Activated T-helper 1 cell treated with anti-CD3 and anti-CD28 coated beads, Interleukin-12 subunit alpha, Interleukin-12 subunit beta, Interleukin-2, Interleukin-4 antibody, amounts not matched to agents 30 ng/mL and 10 ng/mL and 1 ng/mL, durations not matched to agents 14 hours and 24 hours and 36 hours (primary cell): ENCODE measurements at regions of chr1 and their contacts with region 1.

Region 1: GRCh38 chr1:26787706-26788514 is at the start of gene PIGV:
- DNase-seq: peak; percentile 84
- H3K4me3 Mint-ChIP-seq: peak within 1 kb of the TSS; percentile 97
- H3K27ac Mint-ChIP-seq: peak within 1 kb of the TSS; percentile 100
- H3K4me1 Mint-ChIP-seq: peaks cover 74% of the 10 kb centered on the region
- H3K27me3 Mint-ChIP-seq: peaks cover 1% of the 10 kb centered on the region
- total RNA-seq, gene PIGV: 18.5 and 22.6 TPM in 2 replicates

Region 2: DNA sequence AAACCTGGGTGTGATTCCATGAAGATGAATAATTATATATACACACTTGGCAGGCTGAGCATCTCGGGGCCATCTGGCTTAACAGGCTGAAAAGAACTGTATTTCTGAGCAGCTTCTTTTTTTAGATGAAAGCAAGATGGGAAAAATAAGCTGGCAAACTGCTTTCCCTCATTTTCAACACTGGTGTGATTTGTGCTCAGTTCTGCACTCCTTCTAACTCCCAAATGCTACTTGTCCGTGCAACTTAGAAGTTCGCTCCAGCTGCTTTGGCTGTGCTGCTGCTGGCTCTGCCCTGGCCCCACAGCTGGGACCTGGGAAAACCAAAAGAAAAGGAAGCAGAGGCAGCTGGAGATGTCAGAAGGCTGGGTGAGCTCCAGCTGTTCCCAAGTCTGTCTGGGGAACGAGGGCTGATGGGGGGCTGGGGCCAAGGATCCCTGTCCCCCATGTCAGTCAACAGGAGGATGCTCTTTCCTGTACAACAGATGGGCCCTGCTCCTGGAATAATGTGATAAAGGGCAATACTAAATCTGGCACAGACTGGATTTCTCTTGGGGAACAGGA is 835.0 kb before region 1 on chr1:
- intact Hi-C with region 1: no loop called
- DNase-seq: no peak
- H3K4me3 Mint-ChIP-seq: no peak overlapping the region
- H3K27ac Mint-ChIP-seq: no peak overlapping the region
- H3K4me1 Mint-ChIP-seq: peaks cover 4% of the 10 kb centered on the region
- H3K27me3 Mint-ChIP-seq: peaks cover 3% of the 10 kb centered on the region

Region 3: GRCh38 chr1:26431979-26432695 is 355.8 kb before region 1 on chr1 and contains the start of gene DHDDS:
- intact Hi-C with region 1: loop called (anchors 5 kb)
- DNase-seq: peak; percentile 98
- H3K4me3 Mint-ChIP-seq: peak within 1 kb of the TSS; percentile 94
- H3K27ac Mint-ChIP-seq: peak within 1 kb of the TSS; percentile 89
- H3K4me1 Mint-ChIP-seq: peaks cover 18% of the 10 kb centered on the region
- H3K27me3 Mint-ChIP-seq: peaks cover 12% of the 10 kb centered on the region
- total RNA-seq, gene DHDDS: 58.4 and 60.9 TPM in 2 replicates

Region 4: DNA sequence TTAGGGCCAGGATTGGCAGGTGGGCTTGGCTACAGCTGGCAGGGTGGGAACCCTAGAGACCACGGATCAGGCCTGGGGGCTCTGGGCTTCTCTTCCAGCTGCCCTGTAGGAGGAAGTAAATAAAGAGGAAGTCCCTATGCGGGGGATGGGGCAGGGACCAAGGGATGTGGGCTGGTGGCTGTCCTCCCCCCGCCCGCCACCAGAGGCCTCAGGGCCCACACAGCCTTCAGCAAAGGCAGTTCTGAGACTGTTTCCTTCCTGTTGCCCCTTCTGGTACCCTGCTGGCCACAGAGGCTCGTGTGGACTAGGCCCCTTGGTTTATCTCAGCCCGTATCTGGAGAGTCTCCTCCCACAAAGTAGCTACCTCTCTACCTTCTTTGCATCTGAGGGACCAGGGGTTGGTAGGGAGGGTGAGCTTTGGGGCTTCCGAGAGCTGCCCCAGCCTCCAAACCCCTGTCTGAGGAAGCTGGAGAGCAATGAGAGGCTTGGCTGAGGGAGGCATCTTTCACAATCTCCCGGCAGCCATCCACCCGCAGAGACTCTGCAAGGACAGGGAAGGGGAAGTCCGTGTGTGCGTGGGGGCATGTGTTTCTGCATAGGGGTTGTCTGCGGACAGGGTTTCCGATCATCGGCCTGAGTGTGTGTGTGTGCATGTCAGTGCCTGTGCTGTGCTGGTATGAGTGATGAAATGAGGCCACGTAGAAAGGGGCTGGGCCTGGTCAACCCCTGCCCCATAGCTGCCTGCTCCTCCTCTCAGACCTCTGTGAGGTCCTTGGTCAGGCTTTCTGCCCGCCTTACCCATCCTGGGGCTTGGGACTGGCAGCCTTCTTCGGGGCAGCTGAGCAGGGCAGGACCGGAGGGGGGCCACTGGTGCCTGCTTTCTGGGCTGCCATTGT is 245.8 kb before region 1 on chr1:
- intact Hi-C with region 1: loop called (anchors 1 kb)
- DNase-seq: peak; percentile 73
- H3K4me3 Mint-ChIP-seq: peak overlapping the region; percentile 76
- H3K27ac Mint-ChIP-seq: peak overlapping the region; percentile 95
- H3K4me1 Mint-ChIP-seq: peaks cover 85% of the 10 kb centered on the region
- H3K27me3 Mint-ChIP-seq: no peaks in the 10 kb centered on the region

Region 5: DNA sequence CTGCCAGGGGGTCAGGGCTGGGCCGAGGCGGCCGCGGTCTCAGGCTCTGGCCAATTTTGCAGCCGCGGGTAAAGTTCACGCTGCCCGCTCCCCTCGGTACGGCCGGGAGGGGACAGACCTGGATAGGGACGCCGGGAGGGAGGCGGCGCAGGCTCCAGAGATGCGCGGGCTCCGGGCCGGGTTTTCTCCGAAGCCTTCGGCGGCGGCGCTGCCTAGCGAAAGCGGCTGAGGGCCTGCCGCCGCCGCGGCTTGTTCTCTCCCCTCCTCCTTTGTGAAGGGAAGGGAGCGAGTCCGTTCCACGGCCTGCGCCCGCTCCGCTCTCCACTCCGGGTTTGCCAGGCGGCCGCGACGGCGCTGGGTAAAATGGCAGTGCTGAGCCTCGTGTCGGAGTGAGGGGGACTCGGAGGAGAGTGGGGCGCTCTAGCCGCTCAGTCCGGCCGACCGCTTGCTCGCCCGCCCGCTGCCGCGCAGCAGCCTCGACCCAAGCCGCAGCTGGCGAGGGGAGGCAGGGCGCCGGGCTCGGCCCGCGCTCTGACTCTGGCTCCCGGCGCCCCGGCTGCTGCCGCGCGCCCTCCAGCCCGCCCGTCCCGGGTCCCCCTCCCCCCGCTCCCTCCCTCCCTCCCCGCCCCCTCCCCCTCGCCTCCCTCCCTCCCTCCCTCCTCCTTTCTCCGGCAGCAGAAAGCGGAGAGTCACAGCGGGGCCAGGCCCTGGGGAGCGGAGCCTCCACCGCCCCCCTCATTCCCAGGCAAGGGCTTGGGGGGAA is 92.4 kb before region 1 on chr1 and contains the start of gene ARID1A:
- intact Hi-C with region 1: loop called (anchors 1 kb)
- DNase-seq: peak; percentile 96
- H3K4me3 Mint-ChIP-seq: peak within 1 kb of the TSS; percentile 90
- H3K27ac Mint-ChIP-seq: peak within 1 kb of the TSS; percentile 96
- H3K4me1 Mint-ChIP-seq: peaks cover 31% of the 10 kb centered on the region
- H3K27me3 Mint-ChIP-seq: no peaks in the 10 kb centered on the region
- total RNA-seq, gene ARID1A: 130 and 132 TPM in 2 replicates

Region 6: DNA sequence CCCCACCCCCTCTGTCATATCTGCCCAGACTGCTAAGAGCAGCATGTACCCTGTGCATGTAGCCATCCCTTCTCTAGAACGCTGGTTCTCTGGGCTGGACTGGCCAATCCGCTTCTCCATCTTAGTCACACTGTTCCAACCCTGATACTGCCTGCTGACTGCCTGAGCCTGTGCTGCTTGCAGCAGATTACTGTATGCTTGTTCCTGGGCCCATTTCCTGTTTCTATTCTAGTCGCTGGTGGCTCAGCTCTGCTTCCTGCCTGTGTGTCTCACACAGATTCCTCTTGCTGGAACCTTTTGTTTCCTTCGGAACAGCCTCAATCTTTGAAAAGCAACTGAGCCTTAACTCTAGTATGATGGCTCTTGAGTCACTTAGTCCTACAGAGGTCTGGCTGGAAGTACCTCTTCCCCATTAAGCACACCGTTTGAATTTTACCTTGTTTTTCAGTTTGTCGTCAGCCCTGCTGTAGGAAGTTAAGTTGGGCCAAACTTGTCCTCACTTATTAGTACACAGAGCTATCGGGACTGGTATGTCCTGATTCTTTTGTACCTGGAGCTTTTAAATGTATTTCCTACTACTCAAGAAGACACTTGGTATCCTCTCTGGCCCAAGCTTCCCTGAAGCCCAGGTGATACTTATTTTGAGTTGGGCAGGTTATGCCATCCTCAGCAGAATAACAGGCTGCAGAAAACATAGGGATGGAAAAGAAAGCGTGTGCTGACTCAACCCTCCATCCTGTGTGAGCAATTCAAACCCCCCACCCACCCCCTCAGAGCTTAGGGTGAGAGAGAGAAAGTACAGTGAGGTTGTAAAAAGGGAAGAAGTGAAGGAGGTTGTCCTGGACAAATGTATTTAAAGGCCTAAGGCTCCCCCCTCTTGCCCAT is 43.6 kb before region 1 on chr1:
- intact Hi-C with region 1: loop called (anchors 1 kb)
- DNase-seq: peak; percentile 84
- H3K4me3 Mint-ChIP-seq: peak overlapping the region; percentile 73
- H3K27ac Mint-ChIP-seq: peak overlapping the region; percentile 93
- H3K4me1 Mint-ChIP-seq: peaks cover 77% of the 10 kb centered on the region
- H3K27me3 Mint-ChIP-seq: no peaks in the 10 kb centered on the region

Region 7: DNA sequence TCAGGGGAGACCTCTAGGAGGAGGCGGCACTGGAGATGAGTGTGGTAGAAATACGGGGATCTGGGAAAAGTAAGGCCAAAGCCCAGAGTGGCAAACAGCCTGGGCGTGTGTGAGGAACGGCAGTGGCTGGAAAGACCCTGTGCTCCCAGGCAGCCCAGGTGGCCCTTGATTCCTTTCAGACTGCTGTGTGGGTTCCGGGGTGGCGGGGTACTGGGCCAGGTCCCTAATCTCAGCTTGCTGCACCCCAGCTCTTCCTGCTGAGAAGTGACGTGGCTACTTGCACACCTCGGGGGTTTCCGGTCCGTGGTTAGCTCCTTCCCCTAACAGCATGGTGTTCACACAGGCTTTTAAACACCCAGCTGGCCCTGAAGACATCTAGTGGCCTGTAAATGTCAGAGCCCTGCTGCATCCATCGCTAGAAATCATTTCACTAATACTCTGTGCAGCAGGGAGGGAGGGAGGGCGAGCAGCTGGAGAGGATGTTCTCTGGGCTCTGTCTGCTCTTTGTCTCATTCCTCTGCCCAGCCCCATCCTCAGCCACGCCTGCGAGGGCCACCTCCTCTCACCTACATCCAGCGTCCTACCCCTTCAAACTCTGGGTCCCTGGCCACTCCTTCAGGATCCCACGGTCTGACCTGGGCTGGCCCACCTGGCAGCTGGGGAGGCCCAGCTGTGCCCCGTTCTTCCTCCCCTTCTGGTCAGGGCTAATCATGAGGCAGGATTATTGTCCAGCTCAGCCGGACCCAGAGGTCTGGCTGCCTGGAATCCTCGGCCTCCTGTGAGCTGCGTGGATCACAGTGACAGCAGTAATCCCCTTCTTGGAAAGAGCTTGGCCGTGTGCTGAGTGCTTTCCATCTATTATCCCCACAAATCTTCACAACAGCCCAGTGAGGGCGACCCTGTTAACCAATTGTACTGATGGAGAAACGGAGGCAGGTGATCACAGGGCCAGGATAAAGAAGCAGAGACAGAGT is 45.8 kb after region 1 on chr1:
- intact Hi-C with region 1: loop called (anchors 1 kb)
- DNase-seq: peak; percentile 89
- H3K4me3 Mint-ChIP-seq: peak overlapping the region; percentile 75
- H3K27ac Mint-ChIP-seq: peak overlapping the region; percentile 99
- H3K4me1 Mint-ChIP-seq: peaks cover 69% of the 10 kb centered on the region
- H3K27me3 Mint-ChIP-seq: no peaks in the 10 kb centered on the region

Region 8: DNA sequence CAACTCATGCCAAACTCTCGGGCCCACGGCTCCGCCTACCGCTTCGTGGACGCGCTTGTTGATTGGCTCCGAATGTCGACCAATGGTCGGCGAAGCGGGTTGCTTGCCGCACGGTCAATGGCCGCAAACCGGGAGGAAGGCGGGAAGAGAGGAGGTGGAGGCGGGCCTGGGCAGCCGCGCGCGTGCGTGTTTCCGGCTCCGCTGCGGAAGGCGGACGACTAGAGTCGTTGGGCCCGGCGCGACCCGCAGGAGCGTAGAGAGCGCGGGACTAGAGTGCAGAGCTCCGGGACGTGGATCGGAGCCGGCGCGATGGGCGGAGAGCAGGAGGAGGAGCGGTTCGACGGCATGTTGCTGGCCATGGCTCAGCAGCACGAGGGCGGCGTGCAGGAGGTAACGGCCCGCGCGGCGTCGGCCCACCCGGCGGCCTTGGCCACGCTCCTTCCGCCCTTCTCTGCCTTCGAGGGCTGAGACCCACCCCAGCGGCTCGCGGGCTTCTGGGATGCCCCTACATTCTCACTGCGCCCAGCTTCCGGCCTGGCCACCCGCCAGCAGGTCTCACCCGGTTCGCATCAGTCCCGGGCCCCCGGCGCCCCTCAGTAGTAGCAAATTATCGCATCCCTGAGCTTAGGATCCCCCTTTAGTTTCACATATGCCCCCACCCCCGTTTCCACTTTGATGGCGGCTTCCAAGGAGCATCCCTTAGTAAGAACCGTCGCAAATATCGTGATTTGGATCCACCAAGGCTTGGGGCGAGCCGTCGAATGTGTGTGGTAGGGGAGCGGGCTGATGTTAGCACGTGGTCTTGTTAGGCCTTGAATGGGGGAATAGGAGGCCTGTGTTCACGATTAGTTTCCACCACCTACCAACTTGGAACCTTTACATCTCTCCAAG is 133.9 kb after region 1 on chr1 and contains the start of gene NUDC:
- intact Hi-C with region 1: loop called (anchors 1 kb)
- DNase-seq: peak; percentile 97
- H3K4me3 Mint-ChIP-seq: peak within 1 kb of the TSS; percentile 97
- H3K27ac Mint-ChIP-seq: peak within 1 kb of the TSS; percentile 96
- H3K4me1 Mint-ChIP-seq: peaks cover 31% of the 10 kb centered on the region
- H3K27me3 Mint-ChIP-seq: peaks cover 2% of the 10 kb centered on the region
- total RNA-seq, gene NUDC: 151 and 152 TPM in 2 replicates